Mammary epithelial cell (primary cell): ENCODE measurements at regions of chr17 and their contacts with region 1.

Region 1: DNA sequence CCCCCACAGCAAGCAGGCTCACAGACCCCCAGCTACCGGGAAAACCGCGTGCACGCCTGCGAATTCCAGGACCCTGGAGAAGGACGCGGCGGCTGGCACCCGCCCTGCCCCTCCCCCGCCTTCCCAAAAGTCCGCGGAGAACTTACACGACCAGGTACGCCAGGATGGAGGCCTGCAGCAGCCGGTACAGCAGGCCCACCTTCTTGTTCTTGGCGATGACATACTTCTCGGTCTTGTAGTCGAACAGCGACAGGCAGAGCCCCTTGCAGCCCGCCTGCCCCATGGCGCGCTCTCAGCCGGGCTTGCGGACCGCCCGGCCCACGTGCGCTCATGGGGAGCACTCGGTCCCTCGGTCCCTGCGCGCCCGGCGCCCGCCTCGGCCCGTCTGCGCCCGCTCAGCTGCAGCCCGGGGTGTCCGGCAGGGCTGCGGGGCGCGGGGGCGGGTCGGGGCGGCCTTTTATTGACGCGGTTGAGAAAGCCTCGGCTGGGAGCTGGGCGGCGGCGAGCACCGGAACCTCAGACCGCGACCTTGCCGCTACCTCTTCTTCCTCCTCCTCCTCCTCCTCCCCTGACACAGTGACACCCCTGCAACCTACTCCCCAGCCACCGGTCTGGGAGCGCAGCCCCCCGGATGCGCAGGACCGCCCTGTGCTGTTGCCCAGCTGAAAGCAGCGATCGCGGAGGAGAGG is at the start of gene P2RX5:
- DNase-seq: peak; percentile 13
- H3K4me3 ChIP-seq: peak within 1 kb of the TSS; percentile 27 to 51 (median 51)
- H3K27ac ChIP-seq: no peak within 1 kb of the TSS
- H3K4me1 ChIP-seq: peaks cover 12% of the 10 kb centered on the region
- H3K27me3 ChIP-seq: peaks cover 9% of the 10 kb centered on the region
- CTCF ChIP-seq: no peak
- total RNA-seq, gene P2RX5: 3.0 to 4.5 TPM

Region 2: DNA sequence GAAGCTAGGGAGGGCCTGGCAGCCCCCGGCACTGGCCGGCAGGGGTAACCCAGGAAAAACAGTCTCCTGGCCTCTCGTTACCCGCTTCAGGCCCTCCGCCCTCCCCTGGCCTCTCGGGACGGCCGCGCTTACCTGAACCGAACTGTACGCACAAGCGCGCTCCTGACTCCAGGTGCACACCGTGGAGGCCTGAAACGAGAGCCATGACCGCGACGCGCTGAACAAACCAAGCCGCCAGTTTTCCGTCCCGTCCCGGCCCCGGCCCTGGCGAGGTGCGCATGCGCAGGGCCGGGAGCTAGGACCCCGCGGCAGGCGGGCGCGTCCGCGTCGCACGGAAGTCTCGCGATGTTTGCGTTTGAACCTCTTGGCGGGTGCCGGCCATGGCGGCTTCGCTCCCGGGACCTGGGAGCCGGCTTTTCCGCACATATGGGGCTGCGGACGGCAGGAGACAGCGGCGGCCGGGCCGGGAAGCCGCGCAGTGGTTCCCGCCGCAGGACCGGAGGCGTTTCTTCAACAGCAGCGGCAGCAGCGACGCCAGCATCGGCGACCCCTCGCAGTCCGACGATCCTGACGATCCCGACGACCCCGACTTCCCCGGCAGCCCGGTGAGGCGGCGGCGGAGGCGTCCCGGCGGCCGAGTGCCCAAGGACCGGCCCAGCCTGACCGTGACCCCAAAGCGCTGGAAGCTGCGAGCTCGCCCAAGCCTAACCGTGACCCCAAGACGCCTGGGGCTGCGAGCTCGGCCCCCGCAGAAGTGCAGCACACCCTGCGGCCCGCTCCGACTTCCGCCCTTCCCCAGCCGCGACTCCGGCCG is 27.9 kb after region 1 on chr17 and contains the start of gene HASPIN:
- CTCF ChIA-PET with region 1: interaction called, 18 read pairs
- dilution Hi-C with region 1: no loop called
- in situ Hi-C with region 1: no loop called
- intact Hi-C with region 1: no loop called
- DNase-seq: peak; percentile 88
- H3K4me3 ChIP-seq: peak within 1 kb of the TSS; percentile 66 to 95 (median 92)
- H3K27ac ChIP-seq: peak within 1 kb of the TSS; percentile 43
- H3K4me1 ChIP-seq: peaks cover 32% of the 10 kb centered on the region
- H3K27me3 ChIP-seq: no peaks in the 10 kb centered on the region
- CTCF ChIP-seq: peak; percentile 15 to 27
- total RNA-seq, gene HASPIN: 2.0 to 8.9 TPM

Region 3: GRCh38 chr17:3888343-3889171 is 192.7 kb after region 1 on chr17:
- CTCF ChIA-PET with region 1: interaction called, 12 read pairs
- dilution Hi-C with region 1: no loop called
- in situ Hi-C with region 1: no loop called
- intact Hi-C with region 1: no loop called
- DNase-seq: peak; percentile 81
- H3K4me3 ChIP-seq: no peak overlapping the region
- H3K27ac ChIP-seq: peak overlapping the region; percentile 45
- H3K4me1 ChIP-seq: peaks cover 50% of the 10 kb centered on the region
- H3K27me3 ChIP-seq: no peaks in the 10 kb centered on the region
- CTCF ChIP-seq: no peak